ENCODE measurements at regions of chr5 and their contacts with region 1.

Region 1: DNA sequence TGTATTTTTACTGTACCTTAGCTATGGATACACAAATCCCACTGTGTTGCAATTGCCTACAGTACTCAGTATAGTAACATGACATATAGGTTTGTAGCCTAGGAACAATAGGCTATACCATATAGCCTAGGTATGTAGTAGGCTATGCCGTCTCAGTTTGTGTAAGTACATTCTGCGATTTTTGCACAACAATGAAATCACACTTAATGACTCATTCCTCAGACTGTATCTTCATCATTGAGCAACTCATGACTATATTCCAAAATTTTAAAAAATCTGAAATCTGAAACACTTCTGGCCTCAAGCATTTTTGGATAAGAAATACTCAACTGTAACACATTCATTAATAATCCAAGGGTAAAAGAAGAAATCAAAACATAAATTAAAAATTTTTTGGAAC is 666.8 kb upstream of the GRAMD2B start:
- DNase-seq: no peak
- H3K4me3 ChIP-seq: no peak overlapping the region
- H3K27ac ChIP-seq: no peak overlapping the region
- H3K27me3 ChIP-seq: no peaks in the 10 kb centered on the region
- CTCF ChIP-seq: no peak

Region 2: GRCh38 chr5:125311743-125312142 is 444.7 kb before region 1 on chr5:
- CTCF ChIA-PET with region 1: no interaction called
- POLR2A ChIA-PET with region 1: no interaction called
- DNase-seq: peak; percentile 59
- H3K4me3 ChIP-seq: no peak overlapping the region
- H3K27ac ChIP-seq: peak overlapping the region; percentile 74
- H3K27me3 ChIP-seq: no peaks in the 10 kb centered on the region
- CTCF ChIP-seq: no peak

Region 3: GRCh38 chr5:125725691-125726090 is 30.8 kb before region 1 on chr5:
- CTCF ChIA-PET with region 1: no interaction called
- POLR2A ChIA-PET with region 1: no interaction called
- DNase-seq: no peak
- H3K4me3 ChIP-seq: no peak overlapping the region
- H3K27ac ChIP-seq: no peak overlapping the region
- H3K27me3 ChIP-seq: no peaks in the 10 kb centered on the region
- CTCF ChIP-seq: no peak

Region 4: DNA sequence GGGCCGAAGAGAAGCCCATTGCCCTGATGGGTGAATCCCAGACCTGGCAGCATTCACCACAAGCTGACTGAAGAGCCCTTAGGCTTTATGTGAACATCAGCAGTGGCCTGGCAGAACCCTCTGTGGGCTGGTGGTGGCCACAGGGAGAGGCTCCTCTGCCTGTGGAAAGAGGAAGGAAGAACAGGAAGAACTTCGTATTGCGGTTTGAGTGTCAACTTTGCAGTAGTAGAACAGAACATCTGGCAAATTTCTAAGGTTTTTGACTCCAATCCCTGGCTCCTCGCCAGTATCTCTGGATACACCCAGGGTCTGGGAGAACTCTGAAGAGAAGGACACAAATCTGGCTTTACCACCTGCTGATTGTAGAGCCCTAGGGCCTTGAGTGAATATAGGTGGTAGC is 310.4 kb after region 1 on chr5:
- CTCF ChIA-PET with region 1: interaction called, 12 read pairs
- POLR2A ChIA-PET with region 1: no interaction called
- DNase-seq: no peak
- H3K4me3 ChIP-seq: no peak overlapping the region
- H3K27ac ChIP-seq: no peak overlapping the region
- H3K27me3 ChIP-seq: no peaks in the 10 kb centered on the region
- CTCF ChIP-seq: no peak